ENCODE measurements at regions of chr17 and their contacts with region 1.

Region 1: DNA sequence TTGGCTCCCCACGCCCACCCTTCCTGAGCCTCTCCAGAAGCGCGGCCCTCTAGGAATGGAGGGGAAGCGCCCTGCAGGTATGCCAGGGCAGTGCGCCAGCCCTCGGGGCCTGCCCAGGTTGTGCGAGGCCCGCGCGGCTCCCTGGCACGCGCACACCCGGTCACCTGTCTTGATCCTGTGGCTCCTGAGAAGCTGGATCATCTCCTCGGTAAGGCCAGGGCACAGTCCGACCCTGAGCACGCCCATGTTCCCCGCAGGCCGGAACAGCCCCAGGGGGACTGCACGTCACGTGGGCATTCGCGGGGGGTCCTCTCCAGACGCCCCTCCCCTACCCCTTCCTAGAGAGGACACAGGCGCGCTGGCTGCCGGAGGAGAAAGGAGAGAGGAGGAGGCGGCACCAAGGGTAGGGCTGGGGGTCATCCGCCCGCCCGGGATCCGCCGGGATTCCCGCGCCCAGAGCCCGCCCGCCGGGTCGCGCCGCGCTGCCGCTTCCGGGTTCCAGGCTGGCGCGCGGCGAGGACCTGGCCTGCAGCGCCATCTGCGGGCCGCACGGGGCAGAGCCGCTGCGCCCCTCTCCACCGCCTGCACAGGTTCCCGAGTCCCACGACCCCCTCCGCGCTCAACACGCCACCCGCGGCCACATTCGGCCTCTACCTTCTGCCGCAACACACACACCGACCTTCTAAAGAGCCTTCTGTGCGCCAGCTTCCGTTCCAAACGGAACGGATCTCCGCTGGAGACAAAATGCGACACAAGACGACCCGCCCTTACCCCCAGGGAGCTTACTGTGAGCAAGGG is at the start of gene RAD51D:
- DNase-seq: peak; percentile 87
- H3K4me3 ChIP-seq: peak within 1 kb of the TSS; percentile 93
- H3K27ac ChIP-seq: peak within 1 kb of the TSS; percentile 31
- H3K4me1 ChIP-seq: peaks cover 10% of the 10 kb centered on the region
- CTCF ChIP-seq: peak; percentile 90
- total RNA-seq, gene RAD51D: 18.9 and 22.4 TPM in 2 replicates

Region 2: GRCh38 chr17:34542700-34543336 is 576.7 kb before region 1 on chr17:
- CTCF ChIA-PET with region 1: no interaction called
- POLR2A ChIA-PET with region 1: no interaction called
- intact Hi-C with region 1: loop called (anchors 1 kb)
- DNase-seq: peak; percentile 46
- H3K4me3 ChIP-seq: no peak overlapping the region
- H3K27ac ChIP-seq: no peak overlapping the region
- H3K4me1 ChIP-seq: no peaks in the 10 kb centered on the region
- CTCF ChIP-seq: peak; percentile 100

Region 3: GRCh38 chr17:34980681-34981537 is 138.7 kb before region 1 on chr17:
- CTCF ChIA-PET with region 1: no interaction called
- POLR2A ChIA-PET with region 1: interaction called, 3 read pairs
- intact Hi-C with region 1: loop called (anchors 5 kb)
- DNase-seq: peak; percentile 84
- H3K4me3 ChIP-seq: peak overlapping the region; percentile 92
- H3K27ac ChIP-seq: peak overlapping the region; percentile 82
- H3K4me1 ChIP-seq: peaks cover 16% of the 10 kb centered on the region
- CTCF ChIP-seq: peak; percentile 63

Region 4: GRCh38 chr17:35063514-35064223 is 55.9 kb before region 1 on chr17 and contains the start of gene RFFL:
- CTCF ChIA-PET with region 1: interaction called, 18 read pairs
- POLR2A ChIA-PET with region 1: no interaction called
- intact Hi-C with region 1: no loop called
- DNase-seq: peak; percentile 53
- H3K4me3 ChIP-seq: peak within 1 kb of the TSS; percentile 22
- H3K27ac ChIP-seq: no peak within 1 kb of the TSS
- H3K4me1 ChIP-seq: peaks cover 11% of the 10 kb centered on the region
- CTCF ChIP-seq: 0 out of 2 replicates have a peak, but pooled peaks have one; percentile 24
- total RNA-seq, gene RFFL: 15.6 and 20.6 TPM in 2 replicates

Region 5: DNA sequence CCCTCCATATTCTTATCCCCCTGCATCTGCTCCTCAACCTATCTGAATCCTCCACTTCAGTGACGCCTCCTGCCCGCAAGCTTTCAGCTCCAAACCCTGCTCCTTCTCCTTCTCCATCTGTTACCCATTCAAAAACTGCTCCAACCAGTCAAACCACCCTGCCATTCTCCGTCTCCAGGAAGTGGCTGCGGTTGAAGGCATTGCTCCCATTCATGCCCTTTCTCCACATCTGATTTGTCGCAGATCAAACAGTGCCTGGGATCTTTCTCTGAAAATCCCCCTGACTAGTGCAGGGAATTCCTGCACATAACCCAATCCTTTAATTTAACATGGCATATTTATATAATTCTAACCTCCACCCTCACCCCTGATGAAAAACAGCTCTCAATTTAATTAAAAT is 179.6 kb after region 1 on chr17:
- CTCF ChIA-PET with region 1: no interaction called
- POLR2A ChIA-PET with region 1: no interaction called
- intact Hi-C with region 1: no loop called
- DNase-seq: no peak
- H3K4me3 ChIP-seq: no peak overlapping the region
- H3K27ac ChIP-seq: no peak overlapping the region
- H3K4me1 ChIP-seq: no peaks in the 10 kb centered on the region
- CTCF ChIP-seq: no peak